Posterior cingulate gyrus (tissue), 11 donors: ENCODE measurements at regions of chr12 and their contacts with region 1.

Region 1: DNA sequence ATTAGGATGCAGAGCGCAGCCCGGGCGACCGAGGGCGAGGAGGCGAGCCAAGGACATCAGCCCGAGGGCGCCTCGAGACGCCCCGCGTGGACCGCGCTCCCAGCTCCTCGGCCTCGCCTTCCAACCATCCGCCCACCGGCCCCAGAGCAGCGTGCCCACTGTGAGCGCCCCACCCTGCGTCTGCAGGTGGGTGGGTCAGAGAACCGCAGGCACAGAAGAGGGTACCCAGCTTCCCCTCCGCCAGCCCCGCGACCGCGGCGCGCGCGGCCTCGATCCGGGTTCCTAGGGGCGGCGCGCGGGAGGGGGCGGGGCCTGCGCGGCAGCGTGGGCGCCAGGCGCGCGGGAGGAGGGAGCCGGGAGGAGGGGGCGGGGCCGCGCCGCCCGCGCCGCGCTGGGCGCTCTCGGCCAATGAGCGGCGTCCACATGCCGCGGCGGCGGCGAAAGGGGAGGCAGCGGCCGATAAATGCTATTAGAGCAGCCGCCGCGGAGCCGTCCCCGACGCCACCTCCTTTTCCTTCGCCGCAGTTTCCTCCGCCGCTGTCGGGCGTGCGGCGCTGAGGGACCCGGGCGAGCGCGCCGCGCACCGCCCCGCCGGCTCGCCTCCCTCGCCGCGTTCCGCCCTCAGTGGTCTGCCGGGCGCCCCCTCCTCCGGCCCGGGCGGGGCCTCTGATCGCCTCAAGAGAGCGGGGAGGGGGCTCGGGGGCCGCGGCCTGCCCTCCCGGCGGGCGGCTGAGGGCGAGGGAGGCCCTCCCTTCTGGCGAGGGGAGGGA is at the start of gene ATP2A2:
- DNase-seq: peak; percentile 73 to 98 (median 88)

Region 2: DNA sequence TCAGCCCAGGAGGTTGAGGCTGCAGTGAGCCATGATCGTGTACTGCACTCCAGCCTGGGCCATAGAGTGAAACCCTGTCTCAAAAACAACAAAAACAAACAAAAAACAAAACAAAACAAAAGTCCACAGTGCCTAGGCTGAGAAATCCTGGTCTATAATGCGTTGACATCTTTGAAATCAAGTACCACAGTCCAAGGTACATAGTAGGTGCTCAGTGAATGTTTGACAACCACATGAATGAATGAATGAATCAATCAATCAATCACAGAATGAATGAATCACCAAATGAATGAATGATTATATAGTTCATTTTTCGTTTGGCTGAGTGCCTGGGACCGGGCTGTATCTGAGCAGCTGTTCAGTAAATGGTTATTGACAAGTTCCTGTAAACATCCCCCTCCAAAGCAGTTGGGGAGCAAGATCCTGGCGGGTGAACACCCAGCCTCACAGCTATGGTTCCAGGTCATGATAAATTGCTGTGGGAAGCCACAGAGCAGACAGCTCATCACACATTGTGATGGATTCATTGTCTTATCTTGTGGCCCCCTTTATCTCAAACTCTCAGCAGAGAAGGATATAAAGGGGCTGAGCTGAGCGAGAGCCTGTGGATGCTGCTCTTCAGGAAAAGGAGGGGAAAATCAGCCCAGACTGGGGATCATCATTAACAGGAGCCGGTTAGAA is 187.2 kb before region 1 on chr12:
- intact Hi-C with region 1: loop called (anchors 10 kb)
- DNase-seq: no peak

Region 3: GRCh38 chr12:110124184-110124995 is 156.6 kb before region 1 on chr12 and contains the start of gene IFT81:
- intact Hi-C with region 1: loop called (anchors 2 kb)
- DNase-seq: peak; percentile 89 to 99 (median 96)

Region 4: GRCh38 chr12:110224379-110225304 is 56.3 kb before region 1 on chr12:
- intact Hi-C with region 1: loop called (anchors 5 kb)
- DNase-seq: peak in 4 of 10 donors; percentile 18 to 79 (median 22)